ENCODE measurements at regions of chr2 and their contacts with region 1.

Region 1: GRCh38 chr2:138787053-138787666 is 7.0 kb upstream of the NXPH2 start:
- H3K4me3 ChIP-seq: no peak overlapping the region
- H3K27ac ChIP-seq: no peak overlapping the region
- H3K4me1 ChIP-seq: no peaks in the 10 kb centered on the region
- CTCF ChIP-seq: 0 out of 2 replicates have a peak, but pooled peaks have one; percentile 17

Region 2: GRCh38 chr2:137888845-137889244 is 898.3 kb before region 1 on chr2:
- CTCF ChIA-PET with region 1: interaction called, 15 read pairs
- POLR2A ChIA-PET with region 1: no interaction called
- H3K4me3 ChIP-seq: no peak overlapping the region
- H3K27ac ChIP-seq: no peak overlapping the region
- H3K4me1 ChIP-seq: 0 out of 2 replicates have a peak, but pooled peaks cover 2% of the 10 kb centered on the region
- CTCF ChIP-seq: peak; percentile 41

Region 3: GRCh38 chr2:137910641-137911040 is 876.5 kb before region 1 on chr2:
- CTCF ChIA-PET with region 1: interaction called, 46 read pairs
- POLR2A ChIA-PET with region 1: no interaction called
- H3K4me3 ChIP-seq: no peak overlapping the region
- H3K27ac ChIP-seq: no peak overlapping the region
- H3K4me1 ChIP-seq: no peaks in the 10 kb centered on the region
- CTCF ChIP-seq: no peak

Region 4: DNA sequence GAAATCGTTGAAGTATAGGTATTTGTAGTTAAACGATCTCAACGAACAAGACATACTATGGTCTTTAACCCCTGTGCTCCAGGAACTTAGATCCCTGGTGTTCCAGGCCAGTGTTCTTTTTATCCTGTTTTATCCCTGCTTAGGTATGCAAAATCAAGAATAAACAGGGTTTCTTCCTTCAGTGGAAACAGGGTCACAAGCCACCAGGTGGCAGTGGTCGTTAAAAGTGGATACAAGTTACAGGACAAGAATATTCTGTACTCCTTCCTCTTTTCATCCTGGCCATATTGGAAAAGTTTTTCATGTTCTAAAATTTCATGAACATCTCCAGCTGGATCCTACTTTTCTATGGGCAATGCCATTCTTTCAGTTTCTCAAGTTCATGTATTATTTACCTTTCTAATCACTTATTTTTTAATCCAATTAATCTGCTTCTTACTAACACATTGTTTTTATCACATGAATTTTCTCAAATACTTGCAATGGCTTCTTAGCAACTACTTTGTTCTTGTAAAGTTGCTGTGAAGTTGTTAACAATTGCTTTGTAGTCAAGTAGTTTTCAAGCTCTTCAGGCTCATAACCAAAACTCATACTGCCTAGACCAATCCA is 839.3 kb before region 1 on chr2:
- CTCF ChIA-PET with region 1: interaction called, 14 read pairs
- POLR2A ChIA-PET with region 1: no interaction called
- H3K4me3 ChIP-seq: no peak overlapping the region
- H3K27ac ChIP-seq: no peak overlapping the region
- H3K4me1 ChIP-seq: no peaks in the 10 kb centered on the region
- CTCF ChIP-seq: peak; percentile 33; the same call in 1 of the 2 replicates

Region 5: DNA sequence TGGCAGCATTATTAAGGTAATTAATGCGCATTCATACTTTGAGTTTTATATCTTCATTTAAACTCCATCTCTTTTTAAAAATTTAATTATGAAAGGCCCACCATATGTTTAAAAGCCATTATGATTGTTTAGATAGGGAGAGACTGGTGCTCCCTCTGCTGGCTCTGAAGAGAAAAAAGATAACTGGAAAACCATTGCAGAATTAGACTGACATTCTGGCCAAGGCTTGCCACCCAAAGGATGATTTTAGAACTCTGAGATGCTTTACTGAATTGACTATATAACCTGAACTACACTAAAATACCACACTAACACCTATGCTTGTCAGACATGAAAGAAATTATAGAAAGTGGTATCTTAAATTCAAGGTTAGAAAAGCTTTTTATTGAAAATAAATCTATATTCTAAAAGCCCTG is 413.2 kb before region 1 on chr2:
- CTCF ChIA-PET with region 1: interaction called, 12 read pairs
- POLR2A ChIA-PET with region 1: no interaction called
- H3K4me3 ChIP-seq: no peak overlapping the region
- H3K27ac ChIP-seq: no peak overlapping the region
- H3K4me1 ChIP-seq: no peaks in the 10 kb centered on the region
- CTCF ChIP-seq: no peak

Region 6: DNA sequence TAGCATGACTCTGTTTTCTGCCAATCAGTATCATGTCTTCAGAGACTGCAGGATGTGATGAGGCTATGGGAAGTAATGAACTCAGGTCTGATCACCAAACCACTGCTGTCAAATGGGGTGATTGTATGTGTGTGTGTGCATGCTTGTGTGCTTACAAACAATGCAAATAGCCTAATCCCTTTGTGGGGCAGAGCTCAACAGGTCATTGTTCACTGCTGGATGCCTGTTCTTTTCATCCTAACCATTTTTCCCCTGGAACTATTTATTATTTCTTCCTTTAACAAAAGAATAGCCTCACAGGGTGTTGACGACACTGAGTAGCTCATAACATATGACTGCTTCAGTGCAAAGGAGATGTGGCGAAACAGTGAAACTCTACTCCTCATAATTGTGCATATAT is 62.8 kb before region 1 on chr2:
- CTCF ChIA-PET with region 1: interaction called, 10 read pairs
- POLR2A ChIA-PET with region 1: no interaction called
- H3K4me3 ChIP-seq: no peak overlapping the region
- H3K27ac ChIP-seq: no peak overlapping the region
- H3K4me1 ChIP-seq: no peaks in the 10 kb centered on the region
- CTCF ChIP-seq: no peak